ENCODE measurements at regions of chr1 and their contacts with region 1.

Region 1: DNA sequence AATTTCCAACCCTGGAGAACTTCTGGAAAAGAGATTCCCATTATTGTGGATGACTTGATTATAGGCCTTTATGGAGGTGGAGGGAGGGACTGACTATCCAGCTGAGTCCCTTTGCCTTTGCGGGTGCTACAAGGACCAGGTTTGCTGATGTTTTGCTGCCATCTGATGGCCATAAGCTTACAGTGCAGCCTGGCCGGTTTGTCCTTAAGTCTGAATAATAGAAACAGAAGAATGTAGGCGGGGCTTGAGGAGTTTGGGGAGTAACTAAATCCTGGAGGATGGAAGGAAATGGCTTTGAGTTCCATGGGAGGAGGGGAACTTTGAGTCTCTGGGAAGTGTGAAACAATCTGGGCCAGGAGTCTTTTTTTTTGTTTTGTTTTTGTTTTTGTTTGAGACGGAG is 55.7 kb upstream of the CD1D start:
- DNase-seq: peak; percentile 26
- ATAC-seq: peak; percentile 94
- H3K4me3 ChIP-seq: no peak overlapping the region
- H3K27ac ChIP-seq: no peak overlapping the region
- H3K4me1 ChIP-seq: peaks cover 4% of the 10 kb centered on the region
- H3K27me3 ChIP-seq: peaks cover 0 to 2% of the 10 kb centered on the region in 2 experiments; a peak in 3 of 4 replicates
- CTCF ChIP-seq: peak; percentile 88 to 95 (median 91)
- EP300 ChIP-seq: no peak
- POLR2A ChIP-seq: no peak
- RAD21 ChIP-seq: peak; percentile 97

Region 2: DNA sequence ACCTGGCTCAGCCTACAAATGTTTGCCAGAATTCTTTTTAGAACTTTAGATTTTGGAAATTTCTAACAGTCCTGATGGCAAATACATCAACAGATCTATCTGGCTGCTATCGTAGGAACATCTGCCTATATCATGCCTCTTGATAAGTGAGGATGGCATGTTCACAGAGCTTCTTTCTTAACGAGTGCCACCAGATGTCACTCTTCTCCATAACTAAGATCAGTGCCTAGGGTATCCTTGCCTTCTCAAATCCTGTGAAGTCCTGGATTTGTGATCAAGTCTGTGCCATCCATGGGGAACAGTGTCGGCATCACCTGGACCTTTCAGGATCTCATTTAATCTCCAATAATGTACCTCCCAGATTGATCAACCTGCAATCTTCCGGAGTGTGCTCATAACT is 246.9 kb before region 1 on chr1:
- CTCF ChIA-PET with region 1: interaction called, 4 read pairs
- POLR2A ChIA-PET with region 1: no interaction called
- RAD21 ChIA-PET with region 1: interaction called, 3 read pairs
- SMC1A ChIA-PET with region 1: interaction called, 3 read pairs
- in situ Hi-C with region 1: no loop called
- intact Hi-C with region 1: loop called (anchors 10 kb)
- DNase-seq: no peak
- ATAC-seq: peak; percentile 70
- H3K4me3 ChIP-seq: no peak overlapping the region
- H3K27ac ChIP-seq: no peak overlapping the region
- H3K4me1 ChIP-seq: no peaks in the 10 kb centered on the region
- H3K27me3 ChIP-seq: no peaks in the 10 kb centered on the region
- CTCF ChIP-seq: peak; percentile 34 to 47 (median 45); a peak in 4 of 6 replicates
- EP300 ChIP-seq: no peak
- POLR2A ChIP-seq: no peak
- RAD21 ChIP-seq: peak; percentile 69

Region 3: GRCh38 chr1:157963713-157964112 is 161.3 kb before region 1 on chr1:
- CTCF ChIA-PET with region 1: interaction called, 90 read pairs
- POLR2A ChIA-PET with region 1: no interaction called
- RAD21 ChIA-PET with region 1: interaction called, 18 read pairs
- SMC1A ChIA-PET with region 1: interaction called, 17 read pairs
- in situ Hi-C with region 1: loop called (anchors 5 kb)
- intact Hi-C with region 1: loop called (anchors 2 kb)
- DNase-seq: no peak
- ATAC-seq: peak; percentile 87
- H3K4me3 ChIP-seq: no peak overlapping the region
- H3K27ac ChIP-seq: no peak overlapping the region
- H3K4me1 ChIP-seq: peaks cover 6% of the 10 kb centered on the region
- H3K27me3 ChIP-seq: peaks cover 3 to 14% of the 10 kb centered on the region in 2 experiments; a peak in 3 of 4 replicates
- CTCF ChIP-seq: peak; percentile 74 to 78 (median 77)
- EP300 ChIP-seq: no peak
- POLR2A ChIP-seq: no peak
- RAD21 ChIP-seq: peak; percentile 85

Region 4: GRCh38 chr1:157992031-157992832 is 132.8 kb before region 1 on chr1:
- CTCF ChIA-PET with region 1: interaction called, 115 read pairs
- POLR2A ChIA-PET with region 1: no interaction called
- RAD21 ChIA-PET with region 1: interaction called, 39 read pairs
- SMC1A ChIA-PET with region 1: interaction called, 21 read pairs
- in situ Hi-C with region 1: no loop called
- intact Hi-C with region 1: loop called (anchors 1 kb)
- DNase-seq: no peak
- ATAC-seq: peak; percentile 83
- H3K4me3 ChIP-seq: no peak overlapping the region
- H3K27ac ChIP-seq: no peak overlapping the region
- H3K4me1 ChIP-seq: no peaks in the 10 kb centered on the region
- H3K27me3 ChIP-seq: peaks cover 6 to 18% of the 10 kb centered on the region in 2 experiments; a peak in 3 of 4 replicates
- CTCF ChIP-seq: peak; percentile 77 to 90 (median 84)
- EP300 ChIP-seq: no peak
- POLR2A ChIP-seq: no peak
- RAD21 ChIP-seq: peak; percentile 75

Region 5: GRCh38 chr1:158107916-158108315 is 17.1 kb before region 1 on chr1:
- CTCF ChIA-PET with region 1: interaction called, 15 read pairs
- POLR2A ChIA-PET with region 1: no interaction called
- RAD21 ChIA-PET with region 1: no interaction called
- SMC1A ChIA-PET with region 1: interaction called, 6 read pairs
- in situ Hi-C with region 1: no loop called
- intact Hi-C with region 1: no loop called
- DNase-seq: no peak
- ATAC-seq: no peak
- H3K4me3 ChIP-seq: no peak overlapping the region
- H3K27ac ChIP-seq: no peak overlapping the region
- H3K4me1 ChIP-seq: no peaks in the 10 kb centered on the region
- H3K27me3 ChIP-seq: peaks cover under 1 to 6% of the 10 kb centered on the region in 2 experiments
- CTCF ChIP-seq: no peak
- EP300 ChIP-seq: no peak
- POLR2A ChIP-seq: no peak
- RAD21 ChIP-seq: no peak

Region 6: GRCh38 chr1:158140764-158141192 is 15.8 kb after region 1 on chr1:
- CTCF ChIA-PET with region 1: interaction called, 10 read pairs
- POLR2A ChIA-PET with region 1: no interaction called
- RAD21 ChIA-PET with region 1: interaction called, 4 read pairs
- SMC1A ChIA-PET with region 1: interaction called, 3 read pairs
- in situ Hi-C with region 1: no loop called
- intact Hi-C with region 1: no loop called
- DNase-seq: no peak
- ATAC-seq: no peak
- H3K4me3 ChIP-seq: no peak overlapping the region
- H3K27ac ChIP-seq: no peak overlapping the region
- H3K4me1 ChIP-seq: no peaks in the 10 kb centered on the region
- H3K27me3 ChIP-seq: no peaks in the 10 kb centered on the region
- CTCF ChIP-seq: no peak
- EP300 ChIP-seq: no peak
- POLR2A ChIP-seq: no peak
- RAD21 ChIP-seq: no peak

Region 7: GRCh38 chr1:158257888-158258287 is 132.9 kb after region 1 on chr1:
- CTCF ChIA-PET with region 1: no interaction called
- POLR2A ChIA-PET with region 1: no interaction called
- RAD21 ChIA-PET with region 1: no interaction called
- SMC1A ChIA-PET with region 1: no interaction called
- in situ Hi-C with region 1: no loop called
- intact Hi-C with region 1: no loop called
- DNase-seq: no peak
- ATAC-seq: no peak
- H3K4me3 ChIP-seq: no peak overlapping the region
- H3K27ac ChIP-seq: no peak overlapping the region
- H3K4me1 ChIP-seq: no peaks in the 10 kb centered on the region
- H3K27me3 ChIP-seq: peaks cover 0 to 5% of the 10 kb centered on the region in 2 experiments; a peak in 1 of 4 replicates
- CTCF ChIP-seq: no peak
- EP300 ChIP-seq: no peak
- POLR2A ChIP-seq: no peak
- RAD21 ChIP-seq: no peak

Region 8: DNA sequence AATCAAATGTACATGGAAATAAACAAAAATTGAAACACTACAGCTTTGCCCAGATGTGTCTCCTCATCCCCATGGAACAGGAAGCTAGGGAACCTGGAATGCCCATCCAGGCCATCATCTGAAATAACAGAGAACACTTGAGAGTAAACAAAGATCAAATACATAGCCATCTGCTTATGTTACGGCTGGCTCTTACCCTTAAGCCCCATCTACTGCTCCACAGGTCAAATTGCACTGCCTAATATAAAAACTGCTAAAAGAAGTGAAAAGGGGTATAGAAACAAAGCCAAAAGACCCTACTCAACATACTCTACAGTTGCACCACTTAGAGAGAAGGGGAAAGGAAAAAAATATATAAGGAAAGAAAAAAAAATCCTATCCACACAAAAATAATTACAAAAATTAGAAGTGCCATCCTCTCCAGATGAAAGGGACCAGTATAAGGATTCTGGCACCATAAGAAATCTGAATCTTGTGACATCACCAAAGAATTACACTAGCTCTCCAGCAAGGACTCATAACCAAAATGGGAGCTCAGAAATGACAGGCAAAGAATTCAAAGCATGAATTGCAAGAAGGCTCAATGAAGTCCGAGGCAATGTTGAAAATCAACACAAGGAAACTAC is 402.3 kb after region 1 on chr1:
- CTCF ChIA-PET with region 1: no interaction called
- POLR2A ChIA-PET with region 1: no interaction called
- RAD21 ChIA-PET with region 1: no interaction called
- SMC1A ChIA-PET with region 1: no interaction called
- in situ Hi-C with region 1: no loop called
- intact Hi-C with region 1: no loop called
- DNase-seq: no peak
- ATAC-seq: no peak
- H3K4me3 ChIP-seq: no peak overlapping the region
- H3K27ac ChIP-seq: no peak overlapping the region
- H3K4me1 ChIP-seq: no peaks in the 10 kb centered on the region
- H3K27me3 ChIP-seq: no peaks in the 10 kb centered on the region
- CTCF ChIP-seq: no peak
- EP300 ChIP-seq: no peak
- POLR2A ChIP-seq: no peak
- RAD21 ChIP-seq: no peak